Activated naive CD4-positive, alpha-beta T cell treated with anti-CD3 and anti-CD28 coated beads for 36 hours (primary cell): ENCODE measurements at regions of chr1 and their contacts with region 1.

Region 1: DNA sequence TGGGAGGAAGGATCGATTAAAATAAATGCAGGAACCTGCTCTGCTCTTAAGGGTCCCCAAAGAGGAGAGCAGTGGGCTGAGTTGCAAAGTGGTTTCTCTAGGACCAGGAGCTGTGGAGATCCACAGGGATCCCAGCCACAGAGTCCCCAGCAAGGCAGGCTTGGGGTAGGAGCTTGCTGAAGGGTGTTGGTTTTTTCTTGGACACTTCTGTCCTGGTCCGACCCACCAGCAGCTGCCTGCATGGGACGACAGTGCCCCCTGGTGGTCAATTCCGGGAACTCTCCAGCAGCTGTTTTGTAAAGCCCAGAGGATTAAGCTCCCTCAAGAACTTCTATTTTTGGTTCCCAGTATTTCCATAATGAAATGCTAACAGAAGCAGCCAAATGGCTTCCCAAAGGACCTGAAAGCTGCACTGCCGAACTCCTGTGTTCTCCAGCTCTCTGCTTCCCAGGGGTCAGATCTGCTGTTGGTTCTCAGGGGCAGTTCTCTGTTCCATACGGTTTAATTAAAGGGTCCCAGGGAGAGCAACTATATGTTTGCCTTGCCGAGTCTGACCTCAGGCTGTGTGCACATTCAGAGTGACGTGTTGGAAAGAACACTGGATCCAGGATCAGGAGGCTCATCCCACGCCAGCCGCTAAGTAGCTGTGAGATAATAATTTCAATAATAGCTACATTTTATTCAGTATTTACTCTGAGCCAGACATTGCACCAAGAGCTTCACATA is 23.2 kb downstream of the NENF start:
- DNase-seq: peak; percentile 89
- H3K4me3 Mint-ChIP-seq: no peak overlapping the region
- H3K27ac Mint-ChIP-seq: no peak overlapping the region
- H3K4me1 Mint-ChIP-seq: peaks cover 3% of the 10 kb centered on the region
- H3K27me3 Mint-ChIP-seq: no peaks in the 10 kb centered on the region

Region 2: GRCh38 chr1:211675230-211676105 is 780.5 kb before region 1 on chr1 and contains the start of gene NEK2:
- CTCF ChIA-PET with region 1: interaction called, 82 read pairs
- intact Hi-C with region 1: loop called (anchors 1 kb)
- DNase-seq: peak; percentile 97
- H3K4me3 Mint-ChIP-seq: peak within 1 kb of the TSS; percentile 86
- H3K27ac Mint-ChIP-seq: peak within 1 kb of the TSS; percentile 76
- H3K4me1 Mint-ChIP-seq: peaks cover 7% of the 10 kb centered on the region
- H3K27me3 Mint-ChIP-seq: no peaks in the 10 kb centered on the region
- total RNA-seq, gene NEK2: 60.8 to 62.3 TPM

Region 3: GRCh38 chr1:212062832-212063438 is 393.0 kb before region 1 on chr1:
- CTCF ChIA-PET with region 1: interaction called, 16 read pairs
- intact Hi-C with region 1: loop called (anchors 2 kb)
- DNase-seq: no peak
- H3K4me3 Mint-ChIP-seq: no peak overlapping the region
- H3K27ac Mint-ChIP-seq: no peak overlapping the region
- H3K4me1 Mint-ChIP-seq: no peaks in the 10 kb centered on the region
- H3K27me3 Mint-ChIP-seq: no peaks in the 10 kb centered on the region

Region 4: DNA sequence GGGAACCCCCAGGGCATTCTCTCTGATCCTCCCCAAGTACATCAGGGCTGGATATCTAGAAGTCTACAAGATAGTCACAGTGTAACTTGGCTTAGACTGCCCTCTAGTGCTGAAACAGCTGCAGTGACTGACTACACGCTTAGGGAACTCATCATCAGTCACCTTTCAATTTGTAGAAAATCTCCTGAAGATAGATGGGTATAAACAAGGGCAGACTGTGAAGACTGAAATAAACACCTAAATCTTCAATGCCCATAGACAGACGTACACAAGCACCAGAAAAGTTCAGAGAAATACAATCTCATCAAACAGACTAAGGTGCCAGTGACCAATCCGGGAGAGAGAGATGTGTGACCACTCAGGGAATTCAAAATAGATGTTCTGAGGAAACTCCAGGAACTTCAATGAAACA is 87.9 kb before region 1 on chr1:
- CTCF ChIA-PET with region 1: interaction called, 46 read pairs
- intact Hi-C with region 1: loop called (anchors 1 kb)
- DNase-seq: peak; percentile 77
- H3K4me3 Mint-ChIP-seq: no peak overlapping the region
- H3K27ac Mint-ChIP-seq: no peak overlapping the region
- H3K4me1 Mint-ChIP-seq: no peaks in the 10 kb centered on the region
- H3K27me3 Mint-ChIP-seq: no peaks in the 10 kb centered on the region

Region 5: DNA sequence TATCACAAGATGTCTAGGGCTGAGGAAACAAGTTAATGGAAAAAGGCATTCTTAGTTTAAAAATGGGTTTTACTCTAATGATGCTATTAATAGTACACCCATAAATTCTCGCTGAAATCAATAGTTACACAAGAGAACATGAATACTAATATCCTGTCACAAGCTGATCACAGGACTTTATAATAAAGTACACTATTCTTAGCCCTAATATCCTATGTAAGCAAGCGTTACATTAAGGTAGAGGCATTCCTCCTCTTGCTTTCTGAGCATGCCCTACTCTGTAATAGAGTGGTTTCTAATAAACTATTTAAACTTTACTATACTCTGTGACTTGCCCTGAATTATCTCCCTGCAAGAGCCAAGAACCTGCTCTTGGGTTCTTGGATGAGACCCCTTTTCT is 34.8 kb before region 1 on chr1:
- CTCF ChIA-PET with region 1: interaction called, 47 read pairs
- intact Hi-C with region 1: no loop called
- DNase-seq: no peak
- H3K4me3 Mint-ChIP-seq: no peak overlapping the region
- H3K27ac Mint-ChIP-seq: no peak overlapping the region
- H3K4me1 Mint-ChIP-seq: no peaks in the 10 kb centered on the region
- H3K27me3 Mint-ChIP-seq: no peaks in the 10 kb centered on the region

Region 6: DNA sequence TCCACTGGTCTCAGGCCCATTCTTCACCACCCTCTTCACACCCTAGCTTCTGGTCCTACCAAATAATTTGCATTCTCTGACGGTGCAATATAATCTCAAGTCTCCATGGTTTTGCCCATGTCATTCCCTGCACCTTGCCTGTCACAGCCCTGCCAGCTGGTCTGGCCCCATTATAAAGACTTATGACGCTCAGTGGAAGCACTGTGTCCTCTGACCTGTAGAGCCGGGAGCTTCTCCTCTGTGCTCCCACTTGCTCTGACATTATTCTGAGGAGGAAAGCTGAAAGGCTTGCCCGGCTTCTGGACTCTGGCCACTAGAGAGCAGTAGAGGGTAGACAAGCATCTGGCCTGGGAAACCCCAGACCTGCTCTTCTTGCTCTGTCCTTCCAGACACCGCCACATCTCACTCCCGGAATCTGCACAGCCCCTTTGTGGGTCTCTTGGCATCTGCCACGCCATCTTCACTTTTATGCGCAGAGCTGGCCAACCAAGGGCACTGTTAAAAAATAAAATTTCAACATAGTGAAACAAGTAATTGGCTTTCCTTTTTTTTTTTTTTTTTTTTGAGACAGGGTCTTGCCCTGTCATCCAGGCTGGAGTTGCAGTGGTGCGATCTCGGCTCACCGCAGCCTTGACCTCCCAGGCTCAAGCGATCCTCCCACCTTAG is 21.2 kb after region 1 on chr1:
- CTCF ChIA-PET with region 1: interaction called, 72 read pairs
- intact Hi-C with region 1: loop called (anchors 1 kb)
- DNase-seq: peak; percentile 91
- H3K4me3 Mint-ChIP-seq: no peak overlapping the region
- H3K27ac Mint-ChIP-seq: no peak overlapping the region
- H3K4me1 Mint-ChIP-seq: peaks cover 18% of the 10 kb centered on the region
- H3K27me3 Mint-ChIP-seq: peaks cover 9% of the 10 kb centered on the region

Region 7: DNA sequence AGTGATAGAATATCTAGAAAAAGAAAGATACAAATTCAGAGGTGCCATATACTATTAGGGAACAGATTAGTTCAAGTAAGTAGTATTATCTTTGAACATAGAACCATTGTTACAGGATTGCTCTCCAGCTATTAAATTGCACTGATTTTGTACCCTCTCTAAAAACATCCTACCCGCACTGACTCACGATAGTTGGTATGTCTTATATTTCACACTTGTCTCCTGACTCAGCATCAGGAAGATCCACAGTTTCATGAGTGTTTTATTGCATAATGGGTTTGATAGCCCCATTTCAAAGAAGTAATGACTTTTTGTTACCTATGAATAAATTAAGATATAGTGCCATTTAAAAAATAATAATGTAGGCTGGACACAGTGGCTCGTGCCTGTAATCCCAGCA is 341.7 kb after region 1 on chr1:
- CTCF ChIA-PET with region 1: no interaction called
- intact Hi-C with region 1: no loop called
- DNase-seq: no peak
- H3K4me3 Mint-ChIP-seq: no peak overlapping the region
- H3K27ac Mint-ChIP-seq: no peak overlapping the region
- H3K4me1 Mint-ChIP-seq: peaks cover 14% of the 10 kb centered on the region
- H3K27me3 Mint-ChIP-seq: no peaks in the 10 kb centered on the region